Pancreas (tissue), 10 donors: ENCODE measurements at regions of chr4 and their contacts with region 1.

Region 1: DNA sequence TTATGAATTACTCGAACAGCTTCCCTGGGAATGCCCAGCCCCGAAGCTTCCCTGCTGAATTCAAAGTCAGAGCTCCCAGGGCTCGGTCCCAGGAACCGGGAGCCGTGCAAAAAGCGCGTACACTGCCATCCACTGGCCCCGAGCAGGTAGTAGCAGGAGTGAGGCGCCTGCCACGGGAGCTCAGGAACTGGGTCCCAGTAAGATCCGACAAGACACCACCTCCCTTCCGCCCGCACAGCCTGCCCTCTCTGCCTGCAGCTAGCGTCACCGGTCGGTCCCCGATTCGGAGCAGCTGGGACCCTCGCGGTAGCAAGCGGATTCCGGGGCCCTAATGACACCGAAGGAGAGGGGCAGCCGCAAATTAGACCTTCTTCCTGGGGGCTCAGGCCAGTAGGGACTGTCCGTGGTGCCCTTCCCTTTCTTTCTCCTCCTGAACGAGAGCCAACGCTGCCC is 1.2 kb downstream of the CORIN start:
- DNase-seq: peak; percentile 63 to 93 (median 82)
- ATAC-seq: peak; percentile 95 to 98 (median 96)
- H3K4me3 ChIP-seq: peak overlapping the region; percentile 14 to 58 (median 45)
- H3K27ac ChIP-seq: no peak overlapping the region
- H3K4me1 ChIP-seq: peaks cover 0 to 7% (median 5%) of the 10 kb centered on the region in 3 donors
- H3K27me3 ChIP-seq: peaks cover 0 to 3% (median 0%) of the 10 kb centered on the region in 4 donors
- CTCF ChIP-seq: peak; percentile 16 to 58 (median 52)

Region 2: GRCh38 chr4:47669946-47670345 is 166.7 kb before region 1 on chr4:
- intact Hi-C with region 1: loop called in 1 of 3 experiments (anchors 10 kb)
- DNase-seq: peak in 3 of 6 donors; percentile 13 to 35 (median 24)
- ATAC-seq: peak; percentile 83 to 89 (median 88)
- H3K4me3 ChIP-seq: no peak overlapping the region
- H3K27ac ChIP-seq: no peak overlapping the region
- H3K4me1 ChIP-seq: no peaks in the 10 kb centered on the region
- H3K27me3 ChIP-seq: no peaks in the 10 kb centered on the region
- CTCF ChIP-seq: no peak

Region 3: GRCh38 chr4:47686294-47686872 is 150.3 kb before region 1 on chr4:
- intact Hi-C with region 1: loop called in 1 of 3 experiments (anchors 10 kb)
- DNase-seq: peak in 5 of 6 donors; percentile 25 to 65 (median 29)
- ATAC-seq: peak; percentile 67 to 92 (median 87)
- H3K4me3 ChIP-seq: no peak overlapping the region
- H3K27ac ChIP-seq: no peak overlapping the region
- H3K4me1 ChIP-seq: no peaks in the 10 kb centered on the region
- H3K27me3 ChIP-seq: no peaks in the 10 kb centered on the region
- CTCF ChIP-seq: peak; percentile 31 to 52 (median 36)

Region 4: GRCh38 chr4:47704693-47705325 is 131.9 kb before region 1 on chr4:
- intact Hi-C with region 1: loop called in 1 of 3 experiments (anchors 10 kb)
- DNase-seq: peak; percentile 20 to 57 (median 34)
- ATAC-seq: peak; percentile 89 to 97 (median 96)
- H3K4me3 ChIP-seq: no peak overlapping the region
- H3K27ac ChIP-seq: peak overlapping the region in 3 of 4 donors; percentile 20 to 35 (median 20)
- H3K4me1 ChIP-seq: peaks cover 0 to 12% (median 5%) of the 10 kb centered on the region in 3 donors
- H3K27me3 ChIP-seq: no peaks in the 10 kb centered on the region
- CTCF ChIP-seq: peak in 2 of 4 donors; percentile 12 to 22

Region 5: DNA sequence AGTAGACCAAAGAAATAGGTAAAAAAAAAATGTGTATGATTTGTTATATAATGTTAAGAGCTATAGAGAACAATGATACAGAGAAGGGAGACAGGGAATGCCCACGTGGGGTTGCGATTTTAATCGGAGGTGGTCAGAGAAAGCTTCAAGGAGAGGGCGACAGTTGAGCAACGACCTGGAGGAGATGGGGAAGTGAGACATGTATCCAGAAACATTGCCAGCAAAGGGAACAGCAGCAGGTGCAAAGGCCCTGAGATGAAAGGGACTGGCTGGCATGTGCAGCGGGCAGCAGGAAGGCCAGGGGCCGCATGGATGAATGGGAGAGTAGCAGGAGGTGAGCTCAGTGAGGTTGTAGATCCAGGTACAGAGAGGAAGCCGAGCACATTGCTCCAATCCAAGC is 212.8 kb after region 1 on chr4:
- intact Hi-C with region 1: no loop called
- DNase-seq: no peak
- ATAC-seq: no peak
- H3K4me3 ChIP-seq: no peak overlapping the region
- H3K27ac ChIP-seq: no peak overlapping the region
- H3K4me1 ChIP-seq: peaks cover 0 to 12% (median 10%) of the 10 kb centered on the region in 3 donors
- H3K27me3 ChIP-seq: no peaks in the 10 kb centered on the region
- CTCF ChIP-seq: no peak